PC-9 (cell line): ENCODE measurements at regions of chr5 and their contacts with region 1.

Region 1: DNA sequence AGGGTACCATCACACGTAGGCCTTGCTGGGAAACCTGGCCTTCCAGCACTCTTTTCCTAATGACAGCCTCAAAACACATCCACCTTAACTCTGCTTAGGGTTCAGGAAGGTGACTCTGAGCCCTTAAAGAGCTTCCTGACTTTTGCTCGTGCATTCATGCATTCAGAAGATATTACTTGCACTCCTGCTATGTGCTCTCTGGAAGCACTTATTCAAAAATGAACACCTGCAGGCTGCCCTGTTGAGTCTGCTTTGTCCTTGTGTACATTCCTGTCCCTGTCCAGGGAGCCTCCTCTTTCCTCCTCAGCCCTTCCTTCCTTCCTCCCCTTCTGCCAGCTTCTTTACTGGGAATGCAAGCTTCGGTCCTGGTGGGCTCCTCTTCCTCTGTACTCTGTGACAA is 61.5 kb downstream of the SPRY4 start:
- DNase-seq: peak in 1 of 2 experiments; percentile 59
- H3K4me3 ChIP-seq: no peak overlapping the region
- H3K27ac ChIP-seq: no peak overlapping the region
- H3K4me1 ChIP-seq: peaks cover 8% of the 10 kb centered on the region; the same call in 1 of the 2 replicates
- H3K27me3 ChIP-seq: no peaks in the 10 kb centered on the region
- CTCF ChIP-seq: no peak

Region 2: GRCh38 chr5:142235055-142235797 is 28.1 kb before region 1 on chr5:
- CTCF ChIA-PET with region 1: interaction called, 3 read pairs
- POLR2A ChIA-PET with region 1: interaction called, 24 read pairs
- intact Hi-C with region 1: no loop called
- DNase-seq: peak; percentile 57 to 82
- H3K4me3 ChIP-seq: peak overlapping the region; percentile 17; the same call in 1 of the 2 replicates
- H3K27ac ChIP-seq: no peak overlapping the region; the same call in 1 of the 2 replicates
- H3K4me1 ChIP-seq: peaks cover 45% of the 10 kb centered on the region
- H3K27me3 ChIP-seq: no peaks in the 10 kb centered on the region
- CTCF ChIP-seq: no peak